Activated CD4-positive, alpha-beta memory T cell treated with anti-CD3 and anti-CD28 coated beads for 36 hours (primary cell): ENCODE measurements at regions of chr1 and their contacts with region 1.

Region 1: DNA sequence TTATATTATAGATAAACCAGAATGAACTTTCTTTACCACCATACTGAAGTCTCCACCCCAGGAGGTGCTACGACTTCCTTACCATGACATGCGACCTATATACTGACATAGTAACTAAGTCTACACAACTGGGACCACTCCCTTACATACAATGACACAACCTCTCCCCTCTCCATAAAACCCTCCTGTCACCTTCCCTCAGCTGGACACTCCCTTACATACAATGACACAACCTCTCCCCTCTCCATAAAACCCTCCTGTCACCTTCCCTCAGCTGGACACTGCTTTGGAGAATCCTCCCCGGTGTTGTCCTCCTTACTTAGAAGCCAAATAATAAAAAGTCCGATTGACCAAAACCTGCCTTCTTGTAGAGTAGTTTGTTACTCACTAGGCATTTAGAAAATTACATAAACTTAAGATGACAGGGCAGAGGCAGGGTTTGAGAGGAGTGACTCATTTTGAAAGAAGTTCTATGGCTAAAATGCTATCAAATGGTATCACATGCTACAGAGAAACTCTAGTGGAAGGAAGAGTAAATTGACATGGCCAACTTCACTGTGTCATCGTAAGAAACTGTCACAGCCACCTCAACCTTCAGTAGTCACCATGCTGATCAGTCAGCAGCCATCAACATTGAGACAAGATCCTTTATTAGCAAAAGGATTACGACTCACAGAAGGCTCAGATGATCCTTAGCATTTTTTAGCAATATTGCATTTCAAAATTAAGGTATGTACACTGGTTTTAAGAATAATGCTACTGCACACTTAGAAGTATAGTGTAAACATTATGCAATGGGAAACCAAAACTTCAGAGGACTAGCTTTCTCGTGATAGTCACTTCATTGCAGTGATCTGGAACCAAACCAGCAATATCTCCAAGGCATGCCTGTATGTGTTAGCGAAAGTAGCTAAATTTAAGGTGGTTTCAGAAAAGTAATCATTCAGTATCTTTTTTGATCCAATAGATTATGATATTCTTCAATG is 56.4 kb downstream of the AHCTF1 start:
- DNase-seq: peak; percentile 36
- H3K4me3 Mint-ChIP-seq: no peak overlapping the region
- H3K27ac Mint-ChIP-seq: no peak overlapping the region
- H3K4me1 Mint-ChIP-seq: peaks cover 23% of the 10 kb centered on the region
- H3K27me3 Mint-ChIP-seq: no peaks in the 10 kb centered on the region

Region 2: GRCh38 chr1:246860401-246860800 is 14.9 kb before region 1 on chr1:
- CTCF ChIA-PET with region 1: no interaction called
- POLR2A ChIA-PET with region 1: no interaction called
- intact Hi-C with region 1: no loop called
- DNase-seq: no peak
- H3K4me3 Mint-ChIP-seq: no peak overlapping the region
- H3K27ac Mint-ChIP-seq: no peak overlapping the region
- H3K4me1 Mint-ChIP-seq: no peaks in the 10 kb centered on the region
- H3K27me3 Mint-ChIP-seq: no peaks in the 10 kb centered on the region

Region 3: DNA sequence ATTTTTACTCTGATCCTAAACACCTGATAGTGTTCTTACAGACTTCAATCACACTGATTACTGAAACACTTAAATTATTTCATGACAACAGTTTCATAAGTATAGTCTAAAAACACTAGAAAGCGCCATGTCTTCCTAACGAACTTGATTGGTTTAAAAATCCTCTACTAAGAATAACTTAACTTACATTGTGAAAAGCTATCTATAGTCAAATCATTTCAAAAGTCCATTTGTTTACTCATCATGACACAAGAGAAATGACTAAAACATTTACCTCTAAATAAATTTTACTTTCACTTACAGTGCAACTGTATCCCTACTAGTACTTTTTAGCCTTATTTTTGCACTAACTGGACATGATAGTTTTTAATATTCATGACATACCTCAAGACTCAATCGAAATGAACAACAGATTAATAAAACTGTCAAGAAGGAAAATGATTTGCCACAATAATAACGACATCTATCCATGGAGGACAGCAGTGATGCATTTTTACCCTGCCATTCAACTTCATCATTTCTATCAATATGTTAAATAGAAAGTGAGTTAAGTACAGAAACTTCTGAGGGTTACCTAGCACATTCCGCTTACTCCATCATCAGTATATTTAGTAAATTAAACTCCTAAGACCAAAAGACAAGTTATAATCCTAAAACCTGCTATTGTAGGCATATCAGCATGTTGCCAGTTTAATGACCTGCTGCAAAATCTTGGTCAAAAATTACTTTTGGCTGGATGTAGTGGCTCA is 18.0 kb after region 1 on chr1:
- CTCF ChIA-PET with region 1: no interaction called
- POLR2A ChIA-PET with region 1: no interaction called
- intact Hi-C with region 1: loop called (anchors 1 kb)
- DNase-seq: no peak
- H3K4me3 Mint-ChIP-seq: no peak overlapping the region
- H3K27ac Mint-ChIP-seq: peak overlapping the region; percentile 67
- H3K4me1 Mint-ChIP-seq: peaks cover 8% of the 10 kb centered on the region
- H3K27me3 Mint-ChIP-seq: no peaks in the 10 kb centered on the region

Region 4: GRCh38 chr1:247089616-247090375 is 214.5 kb after region 1 on chr1:
- CTCF ChIA-PET with region 1: no interaction called
- POLR2A ChIA-PET with region 1: no interaction called
- intact Hi-C with region 1: no loop called
- DNase-seq: no peak
- H3K4me3 Mint-ChIP-seq: no peak overlapping the region
- H3K27ac Mint-ChIP-seq: no peak overlapping the region
- H3K4me1 Mint-ChIP-seq: no peaks in the 10 kb centered on the region
- H3K27me3 Mint-ChIP-seq: peaks cover 2% of the 10 kb centered on the region

Region 5: DNA sequence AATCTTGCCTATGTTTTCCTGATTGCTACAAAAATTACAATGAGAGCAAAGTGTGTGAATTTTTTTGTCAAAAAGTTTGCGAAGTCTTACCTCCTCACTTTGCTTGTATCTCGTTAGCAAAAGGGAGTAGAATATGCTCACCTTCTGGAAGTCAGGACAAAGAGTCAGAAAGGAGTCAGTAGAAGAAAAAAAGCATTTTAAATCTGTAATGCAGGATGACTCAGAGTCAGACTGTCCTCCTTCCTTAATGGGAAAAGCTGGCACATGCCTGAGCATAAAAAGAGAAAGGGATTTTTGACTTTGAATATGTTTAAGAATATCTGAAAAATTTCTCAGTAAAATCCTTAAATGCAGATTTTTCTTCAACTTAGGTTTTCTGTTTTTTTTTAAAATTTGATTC is 366.4 kb after region 1 on chr1:
- CTCF ChIA-PET with region 1: no interaction called
- POLR2A ChIA-PET with region 1: no interaction called
- intact Hi-C with region 1: no loop called
- DNase-seq: no peak
- H3K4me3 Mint-ChIP-seq: no peak overlapping the region
- H3K27ac Mint-ChIP-seq: no peak overlapping the region
- H3K4me1 Mint-ChIP-seq: no peaks in the 10 kb centered on the region
- H3K27me3 Mint-ChIP-seq: peaks cover 4% of the 10 kb centered on the region

Region 6: GRCh38 chr1:247273013-247273412 is 397.7 kb after region 1 on chr1:
- CTCF ChIA-PET with region 1: no interaction called
- POLR2A ChIA-PET with region 1: no interaction called
- intact Hi-C with region 1: no loop called
- DNase-seq: no peak
- H3K4me3 Mint-ChIP-seq: no peak overlapping the region
- H3K27ac Mint-ChIP-seq: no peak overlapping the region
- H3K4me1 Mint-ChIP-seq: no peaks in the 10 kb centered on the region
- H3K27me3 Mint-ChIP-seq: peaks cover 2% of the 10 kb centered on the region